Activated CD4-positive, alpha-beta memory T cell treated with anti-CD3 and anti-CD28 coated beads for 36 hours (primary cell): ENCODE measurements at regions of chr15 and their contacts with region 1.

Region 1: DNA sequence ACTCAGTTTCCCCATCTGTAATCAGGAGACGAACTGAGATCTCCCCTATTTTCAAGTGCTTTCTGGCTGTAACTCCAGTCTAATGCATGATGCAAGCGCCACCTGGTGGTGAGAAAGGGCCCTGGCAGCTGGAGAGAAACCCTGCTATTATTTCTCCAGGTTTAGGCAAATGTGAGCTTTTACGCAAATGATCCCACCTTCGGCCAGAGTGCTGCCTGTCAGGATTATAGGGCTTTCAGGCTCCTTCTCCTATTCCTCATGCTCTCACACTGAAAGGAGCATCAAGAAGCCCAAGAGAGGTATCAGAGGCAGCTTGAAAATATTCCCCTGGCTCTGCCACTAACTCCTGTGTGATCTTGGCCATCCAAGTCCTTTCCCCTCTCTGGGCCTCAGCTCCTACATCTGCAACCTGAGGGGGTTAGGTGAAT is 93.9 kb upstream of the RASGRF1 start:
- DNase-seq: peak; percentile 78
- H3K4me3 Mint-ChIP-seq: no peak overlapping the region
- H3K27ac Mint-ChIP-seq: no peak overlapping the region
- H3K4me1 Mint-ChIP-seq: no peaks in the 10 kb centered on the region
- H3K27me3 Mint-ChIP-seq: peaks cover 4% of the 10 kb centered on the region

Region 2: GRCh38 chr15:78909791-78910228 is 274.7 kb before region 1 on chr15:
- CTCF ChIA-PET with region 1: interaction called, 46 read pairs
- POLR2A ChIA-PET with region 1: no interaction called
- intact Hi-C with region 1: loop called (anchors 2 kb)
- DNase-seq: peak; percentile 47
- H3K4me3 Mint-ChIP-seq: no peak overlapping the region
- H3K27ac Mint-ChIP-seq: peak overlapping the region; percentile 53
- H3K4me1 Mint-ChIP-seq: peaks cover 23% of the 10 kb centered on the region
- H3K27me3 Mint-ChIP-seq: no peaks in the 10 kb centered on the region

Region 3: GRCh38 chr15:79028411-79028964 is 156.0 kb before region 1 on chr15:
- CTCF ChIA-PET with region 1: interaction called, 137 read pairs
- POLR2A ChIA-PET with region 1: no interaction called
- intact Hi-C with region 1: loop called (anchors 1 kb)
- DNase-seq: peak; percentile 53
- H3K4me3 Mint-ChIP-seq: no peak overlapping the region
- H3K27ac Mint-ChIP-seq: no peak overlapping the region
- H3K4me1 Mint-ChIP-seq: no peaks in the 10 kb centered on the region
- H3K27me3 Mint-ChIP-seq: peaks cover 1% of the 10 kb centered on the region

Region 4: GRCh38 chr15:79157631-79158592 is 26.6 kb before region 1 on chr15:
- CTCF ChIA-PET with region 1: interaction called, 18 read pairs
- POLR2A ChIA-PET with region 1: no interaction called
- intact Hi-C with region 1: no loop called
- DNase-seq: no peak
- H3K4me3 Mint-ChIP-seq: no peak overlapping the region
- H3K27ac Mint-ChIP-seq: no peak overlapping the region
- H3K4me1 Mint-ChIP-seq: no peaks in the 10 kb centered on the region
- H3K27me3 Mint-ChIP-seq: peaks cover 2% of the 10 kb centered on the region

Region 5: GRCh38 chr15:79172801-79173460 is 11.5 kb before region 1 on chr15:
- CTCF ChIA-PET with region 1: interaction called, 27 read pairs
- POLR2A ChIA-PET with region 1: no interaction called
- intact Hi-C with region 1: no loop called
- DNase-seq: no peak
- H3K4me3 Mint-ChIP-seq: no peak overlapping the region
- H3K27ac Mint-ChIP-seq: no peak overlapping the region
- H3K4me1 Mint-ChIP-seq: no peaks in the 10 kb centered on the region
- H3K27me3 Mint-ChIP-seq: peaks cover 29% of the 10 kb centered on the region

Region 6: DNA sequence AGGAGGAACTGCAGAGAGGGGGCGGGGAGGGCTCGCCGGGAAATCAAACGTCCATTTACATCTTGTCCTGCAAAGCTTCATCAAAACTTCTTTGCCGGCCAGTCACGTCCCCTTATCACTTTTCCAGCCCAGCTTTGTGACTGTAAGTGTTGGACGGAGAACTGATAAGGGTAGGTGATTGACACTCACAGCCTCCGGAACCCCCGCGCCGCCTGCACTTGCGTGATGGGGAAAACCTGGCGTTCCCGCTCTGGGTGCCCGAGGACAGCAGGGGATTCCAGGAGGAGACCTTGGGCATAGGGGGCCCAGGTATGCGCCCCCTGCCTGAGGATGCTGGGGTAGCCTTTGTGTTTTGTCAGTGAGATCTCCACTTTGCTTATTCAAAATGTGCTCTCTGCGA is 25.2 kb after region 1 on chr15:
- CTCF ChIA-PET with region 1: interaction called, 15 read pairs
- POLR2A ChIA-PET with region 1: no interaction called
- intact Hi-C with region 1: no loop called
- DNase-seq: no peak
- H3K4me3 Mint-ChIP-seq: no peak overlapping the region
- H3K27ac Mint-ChIP-seq: no peak overlapping the region
- H3K4me1 Mint-ChIP-seq: no peaks in the 10 kb centered on the region
- H3K27me3 Mint-ChIP-seq: peaks cover 28% of the 10 kb centered on the region